ENCODE measurements at regions of chr6 and their contacts with region 1.

Region 1: DNA sequence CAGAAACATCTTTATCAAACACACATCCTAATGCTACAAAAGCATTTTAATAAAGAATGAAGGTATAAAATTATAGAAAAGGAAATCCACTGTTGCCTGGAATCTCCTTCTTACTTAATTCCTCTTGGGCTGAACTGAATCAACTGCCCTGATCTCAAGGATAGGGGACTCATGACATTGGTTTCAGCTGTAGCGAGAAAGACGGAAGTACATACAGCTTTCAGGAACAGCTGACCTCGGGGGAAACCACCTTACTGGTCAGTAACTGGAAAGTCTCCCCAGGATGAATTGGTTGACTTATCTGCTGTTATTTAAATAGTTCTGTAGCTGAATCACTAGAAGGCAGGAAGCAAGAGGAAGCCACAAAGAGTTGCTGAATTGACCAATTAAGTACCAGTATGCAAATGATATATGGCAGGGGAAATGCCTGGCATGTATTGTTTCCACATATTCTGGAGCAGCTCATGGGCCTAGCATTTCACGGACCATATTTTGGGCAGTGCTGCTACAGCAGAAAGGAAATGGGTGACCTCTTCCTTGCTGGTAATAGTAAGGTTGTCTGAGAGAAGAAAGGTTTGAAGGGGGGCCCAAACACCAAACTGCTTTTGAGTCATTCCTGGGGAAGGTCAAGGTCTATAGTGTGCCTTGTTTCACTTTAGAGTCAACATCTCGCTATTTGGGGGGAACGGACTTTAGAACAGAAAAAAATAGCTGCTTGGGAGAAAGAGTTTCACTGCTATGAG is 43.7 kb upstream of the MAP7 start:
- DNase-seq: peak; percentile 79
- H3K4me3 Mint-ChIP-seq: peak overlapping the region; percentile 57
- H3K27ac Mint-ChIP-seq: peak overlapping the region; percentile 89
- H3K4me1 Mint-ChIP-seq: peaks cover 33% of the 10 kb centered on the region
- H3K27me3 Mint-ChIP-seq: no peaks in the 10 kb centered on the region

Region 2: DNA sequence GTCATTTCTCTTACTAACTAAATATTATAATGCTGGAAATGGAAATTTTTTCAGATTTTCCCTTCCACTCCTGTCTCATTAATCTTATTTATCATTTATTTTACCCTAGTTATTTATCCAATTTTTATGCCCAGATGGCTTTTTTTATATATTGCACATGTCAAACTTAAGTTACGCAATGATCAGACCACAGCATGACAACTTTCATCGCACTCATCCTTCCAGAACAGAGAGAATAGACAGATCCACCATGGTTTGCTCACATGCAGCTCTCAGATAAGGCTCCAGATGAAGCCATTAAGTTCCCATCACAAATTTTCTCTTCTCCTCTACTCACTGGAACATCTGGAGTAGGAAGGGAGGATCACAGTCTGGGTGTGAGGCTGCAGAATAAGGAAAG is 92.4 kb before region 1 on chr6:
- CTCF ChIA-PET with region 1: no interaction called
- POLR2A ChIA-PET with region 1: no interaction called
- intact Hi-C with region 1: no loop called
- DNase-seq: no peak
- H3K4me3 Mint-ChIP-seq: no peak overlapping the region
- H3K27ac Mint-ChIP-seq: no peak overlapping the region
- H3K4me1 Mint-ChIP-seq: no peaks in the 10 kb centered on the region
- H3K27me3 Mint-ChIP-seq: peaks cover 1% of the 10 kb centered on the region

Region 3: DNA sequence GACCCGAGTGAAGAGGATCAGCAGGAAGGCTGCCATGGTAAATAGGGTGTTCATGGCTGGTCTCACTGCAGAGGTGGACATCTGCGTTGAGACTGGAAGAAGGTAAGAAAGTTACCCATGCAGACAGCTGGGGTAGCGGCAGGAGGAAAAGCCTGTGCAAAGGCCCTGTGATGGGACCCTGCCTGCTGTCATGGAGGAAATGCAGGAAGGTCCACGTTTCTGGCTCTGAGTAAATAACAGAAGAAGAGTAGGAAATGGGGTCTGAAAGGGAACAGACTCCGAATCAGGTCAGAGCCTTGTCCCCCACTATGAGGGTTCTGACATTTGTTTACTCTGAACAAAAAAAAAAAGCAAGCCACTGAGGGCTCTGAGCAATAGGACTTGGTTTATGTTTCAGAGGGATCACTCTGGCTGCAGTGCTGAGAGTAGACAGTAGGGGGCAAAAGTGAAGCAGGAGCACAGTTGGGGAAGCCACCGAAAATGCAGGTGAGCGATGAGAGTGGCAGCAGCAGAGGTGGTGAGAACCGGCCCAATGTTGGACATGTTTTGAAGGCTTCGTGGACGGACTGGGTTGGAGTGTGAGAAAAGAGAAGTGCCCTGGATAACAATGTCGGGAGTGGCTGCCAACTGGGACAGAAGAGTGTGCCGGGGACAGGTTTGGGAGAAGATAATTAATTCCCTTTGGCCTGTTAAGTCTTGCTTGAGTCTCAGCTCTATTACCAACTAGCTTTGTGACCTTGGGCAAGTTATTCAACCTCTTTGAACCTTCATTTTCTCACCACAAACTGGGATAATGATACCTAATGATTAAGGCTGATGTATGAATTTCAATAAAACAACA is 14.2 kb after region 1 on chr6:
- CTCF ChIA-PET with region 1: interaction called, 5 read pairs
- POLR2A ChIA-PET with region 1: no interaction called
- intact Hi-C with region 1: loop called (anchors 1 kb)
- DNase-seq: peak; percentile 90
- H3K4me3 Mint-ChIP-seq: no peak overlapping the region
- H3K27ac Mint-ChIP-seq: no peak overlapping the region
- H3K4me1 Mint-ChIP-seq: peaks cover 15% of the 10 kb centered on the region
- H3K27me3 Mint-ChIP-seq: no peaks in the 10 kb centered on the region

Region 4: GRCh38 chr6:136822376-136823127 is 228.6 kb after region 1 on chr6 and contains the start of gene PEX7:
- CTCF ChIA-PET with region 1: no interaction called
- POLR2A ChIA-PET with region 1: interaction called, 4 read pairs
- intact Hi-C with region 1: loop called (anchors 1 kb)
- DNase-seq: peak; percentile 93
- H3K4me3 Mint-ChIP-seq: peak within 1 kb of the TSS; percentile 93
- H3K27ac Mint-ChIP-seq: peak within 1 kb of the TSS; percentile 95
- H3K4me1 Mint-ChIP-seq: peaks cover 17% of the 10 kb centered on the region
- H3K27me3 Mint-ChIP-seq: no peaks in the 10 kb centered on the region
- total RNA-seq, gene PEX7: 5.4 to 6.4 TPM